ENCODE measurements at regions of chr4 and their contacts with region 1.

Region 1: GRCh38 chr4:119490335-119490734 is 138.3 kb downstream of the PDE5A start:
- DNase-seq: no peak
- ATAC-seq: no peak
- H3K4me3 ChIP-seq: no peak overlapping the region
- H3K27ac ChIP-seq: no peak overlapping the region
- H3K4me1 ChIP-seq: no peaks in the 10 kb centered on the region
- H3K27me3 ChIP-seq: no peaks in the 10 kb centered on the region
- CTCF ChIP-seq: no peak

Region 2: GRCh38 chr4:119314356-119314755 is 176.0 kb before region 1 on chr4:
- intact Hi-C with region 1: loop called in 1 of 2 experiments (anchors 5 kb)
- DNase-seq: no peak
- ATAC-seq: peak in 2 of 4 donors; percentile 64 to 78
- H3K4me3 ChIP-seq: no peak overlapping the region
- H3K27ac ChIP-seq: no peak overlapping the region
- H3K4me1 ChIP-seq: no peaks in the 10 kb centered on the region
- H3K27me3 ChIP-seq: no peaks in the 10 kb centered on the region
- CTCF ChIP-seq: peak; percentile 48

Region 3: DNA sequence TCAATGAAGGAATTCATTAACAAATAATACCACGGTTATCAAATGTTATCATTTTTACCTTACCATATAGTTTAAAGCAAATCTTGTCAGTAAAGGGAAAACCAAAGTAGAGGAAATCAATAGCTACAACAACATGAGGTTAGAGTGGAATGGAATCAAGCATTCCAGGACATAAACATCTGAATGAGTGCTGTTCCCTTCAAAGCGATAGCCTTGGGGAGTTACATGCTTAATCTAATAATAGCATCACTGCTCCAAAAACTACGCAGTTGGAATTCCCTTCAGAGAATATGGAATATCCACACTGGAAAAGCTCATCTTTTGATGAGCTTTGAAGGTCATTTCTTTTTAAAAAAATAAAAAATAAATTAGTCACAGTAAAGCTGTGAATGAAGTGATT is 107.0 kb after region 1 on chr4:
- intact Hi-C with region 1: no loop called
- DNase-seq: no peak
- ATAC-seq: peak in 1 of 4 donors; percentile 38
- H3K4me3 ChIP-seq: no peak overlapping the region
- H3K27ac ChIP-seq: no peak overlapping the region
- H3K4me1 ChIP-seq: peaks cover 10% of the 10 kb centered on the region
- H3K27me3 ChIP-seq: no peaks in the 10 kb centered on the region
- CTCF ChIP-seq: no peak

Measured in psoas muscle (tissue), 8 donors.